ENCODE measurements at regions of chr20 and their contacts with region 1.

Region 1: GRCh38 chr20:59785986-59786795 is 147.2 kb downstream of the SYCP2 start:
- DNase-seq: no peak
- ATAC-seq: no peak
- H3K4me3 ChIP-seq: no peak overlapping the region
- H3K27ac ChIP-seq: no peak overlapping the region
- H3K4me1 ChIP-seq: no peaks in the 10 kb centered on the region
- H3K27me3 ChIP-seq: peaks cover 0 to 15% of the 10 kb centered on the region in 2 donors
- CTCF ChIP-seq: no peak

Region 2: DNA sequence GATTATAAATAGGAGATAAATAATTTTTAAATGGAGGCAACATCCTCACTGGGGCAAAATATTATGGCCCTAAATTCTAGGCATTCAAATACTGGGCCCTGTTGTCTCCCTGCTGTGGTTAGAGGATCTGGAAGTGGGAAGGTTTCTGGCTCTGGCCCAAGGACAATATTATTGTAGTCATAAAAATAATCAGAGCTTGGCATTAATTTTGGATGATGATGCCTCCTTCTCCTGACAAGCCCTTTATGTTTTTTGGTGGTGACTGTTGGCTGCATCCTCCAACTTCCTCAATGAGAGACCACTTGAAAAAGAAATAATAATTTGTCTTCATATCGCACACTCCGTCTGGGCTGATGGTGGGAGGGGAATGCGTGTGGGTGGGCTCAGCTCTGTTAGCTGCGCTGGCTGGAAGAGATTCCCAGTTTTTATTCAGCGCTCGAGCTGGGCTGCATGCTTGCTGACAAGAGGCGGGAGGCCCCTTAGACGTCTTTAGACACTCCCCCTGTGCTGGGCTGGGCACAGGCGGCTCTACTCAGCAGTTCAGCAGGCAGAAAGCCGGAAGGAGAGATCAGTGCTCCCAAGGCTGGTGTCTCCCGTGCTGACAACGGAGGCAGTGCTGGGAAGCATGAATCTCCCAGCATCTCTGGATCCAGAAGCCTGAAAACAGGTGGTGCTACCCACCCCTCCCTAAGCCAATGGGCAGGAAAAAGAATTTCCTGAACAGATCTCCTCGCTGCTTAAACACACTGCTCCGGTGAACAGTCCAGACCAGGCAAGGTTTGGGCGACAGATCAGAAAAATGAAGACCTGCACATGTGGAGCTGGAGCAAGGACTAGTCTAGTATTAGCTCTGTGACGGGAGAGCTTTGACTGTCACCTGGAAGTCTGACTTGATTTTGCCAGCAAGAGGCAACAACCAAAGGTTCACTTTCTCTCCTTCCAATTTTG is 49.5 kb after region 1 on chr20:
- intact Hi-C with region 1: loop called in 1 of 2 experiments (anchors 5 kb)
- DNase-seq: peak in 3 of 4 donors; percentile 63 to 87 (median 71)
- ATAC-seq: peak; percentile 86
- H3K4me3 ChIP-seq: peak overlapping the region in 1 of 2 donors; percentile 7
- H3K27ac ChIP-seq: no peak overlapping the region
- H3K4me1 ChIP-seq: peaks cover 0 to 12% of the 10 kb centered on the region in 2 donors
- H3K27me3 ChIP-seq: peaks cover 0 to 44% of the 10 kb centered on the region in 2 donors
- CTCF ChIP-seq: no peak

Measured in left lung (tissue), 14 donors.